Calu3 (cell line): ENCODE measurements at regions of chr1 and their contacts with region 1.

Region 1: DNA sequence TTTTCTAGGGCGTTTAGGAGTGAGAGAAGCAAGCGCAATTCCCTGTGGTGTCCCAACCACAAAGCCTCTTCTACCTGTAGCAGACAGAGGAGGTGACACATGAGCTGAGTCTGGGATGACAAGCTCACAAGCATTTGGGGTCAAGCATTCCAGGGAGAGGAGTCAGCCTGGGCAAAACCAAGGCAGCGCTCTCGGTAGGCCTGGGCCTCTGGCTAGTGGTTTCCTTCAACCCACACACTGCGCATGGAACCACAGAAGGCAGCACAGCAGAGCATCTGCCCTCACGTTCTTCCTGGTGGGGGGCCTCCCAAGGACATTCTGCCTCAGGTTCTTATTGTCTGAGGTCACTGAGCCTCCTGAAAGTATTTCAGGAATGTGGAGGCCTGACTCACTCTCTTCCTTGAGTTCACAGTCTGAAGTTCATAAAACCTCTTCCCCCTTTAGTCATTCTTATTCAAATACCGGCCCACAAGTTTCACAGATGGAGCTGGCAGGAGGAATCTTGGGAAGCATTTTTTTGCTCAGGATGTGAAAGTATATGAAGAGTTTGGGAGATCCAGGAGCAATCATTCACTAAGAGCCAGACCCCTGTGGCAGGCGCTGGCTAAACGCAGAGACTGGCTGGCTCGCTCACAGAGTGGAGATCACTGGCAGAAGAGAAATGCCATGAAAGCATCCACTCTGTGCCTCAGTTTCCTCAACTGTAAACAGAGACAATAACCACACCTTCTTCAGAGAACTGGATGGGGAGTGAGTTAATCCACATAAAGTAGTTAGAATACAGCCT is 26.8 kb downstream of the CCN1 start:
- DNase-seq: peak; percentile 89
- H3K4me3 Mint-ChIP-seq: peak overlapping the region; percentile 40
- H3K27ac Mint-ChIP-seq: peak overlapping the region; percentile 88
- H3K4me1 Mint-ChIP-seq: peaks cover 88% of the 10 kb centered on the region
- H3K27me3 Mint-ChIP-seq: no peaks in the 10 kb centered on the region
- CTCF ChIP-seq: no peak

Region 2: DNA sequence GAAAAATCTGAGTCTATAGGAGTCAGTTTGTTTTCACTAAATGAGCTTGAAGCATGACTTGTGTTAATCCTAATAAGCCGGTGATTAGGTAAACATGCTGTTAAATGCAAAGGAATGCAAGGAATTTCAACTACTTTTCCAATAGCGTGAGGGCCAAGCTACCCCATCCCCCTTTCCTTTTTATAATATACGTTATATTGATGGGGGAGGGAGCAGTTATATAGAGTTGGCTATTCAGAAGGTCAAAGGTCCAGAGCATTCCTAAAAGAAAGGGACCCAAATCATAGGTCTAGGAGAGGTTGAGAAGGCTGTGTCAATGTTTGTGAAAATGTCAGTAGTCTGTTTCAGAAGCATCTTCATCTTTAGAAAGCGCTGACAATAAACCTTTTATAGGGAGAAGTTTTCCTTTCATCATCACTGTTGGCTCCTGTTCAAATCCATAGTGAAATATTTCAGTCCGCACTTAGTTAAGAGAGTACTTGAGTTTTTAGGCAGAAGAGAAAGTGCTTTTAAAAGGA is 23.0 kb before region 1 on chr1:
- CTCF ChIA-PET with region 1: interaction called, 10 read pairs
- intact Hi-C with region 1: loop called (anchors 1 kb)
- DNase-seq: no peak
- H3K4me3 Mint-ChIP-seq: peak overlapping the region; percentile 36
- H3K27ac Mint-ChIP-seq: peak overlapping the region; percentile 85
- H3K4me1 Mint-ChIP-seq: peaks cover 34% of the 10 kb centered on the region
- H3K27me3 Mint-ChIP-seq: no peaks in the 10 kb centered on the region
- CTCF ChIP-seq: no peak

Region 3: GRCh38 chr1:85692730-85693314 is 85.5 kb after region 1 on chr1:
- CTCF ChIA-PET with region 1: interaction called, 39 read pairs
- intact Hi-C with region 1: loop called (anchors 1 kb)
- DNase-seq: no peak
- H3K4me3 Mint-ChIP-seq: no peak overlapping the region
- H3K27ac Mint-ChIP-seq: peak overlapping the region; percentile 78
- H3K4me1 Mint-ChIP-seq: peaks cover 32% of the 10 kb centered on the region
- H3K27me3 Mint-ChIP-seq: no peaks in the 10 kb centered on the region
- CTCF ChIP-seq: no peak

Region 4: DNA sequence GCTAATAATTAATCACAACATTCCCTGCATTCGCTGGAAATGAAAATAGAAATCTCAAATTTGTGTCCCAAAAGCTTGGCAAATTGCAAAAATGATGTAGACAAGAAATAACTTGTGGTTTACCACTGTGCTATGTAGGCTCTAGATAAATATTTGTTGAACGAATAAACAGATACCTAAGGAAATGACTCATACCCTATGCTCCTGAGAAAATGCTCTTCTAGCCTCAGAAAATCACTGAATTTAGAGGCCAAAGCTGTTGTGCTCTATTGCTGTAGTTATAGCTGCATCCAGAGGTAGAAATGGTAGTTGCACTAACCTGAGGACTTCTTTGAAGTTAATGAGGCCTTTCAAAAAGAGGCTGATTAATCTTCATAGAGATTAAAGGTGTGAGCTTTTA is 242.9 kb after region 1 on chr1:
- CTCF ChIA-PET with region 1: interaction called, 5 read pairs
- intact Hi-C with region 1: loop called (anchors 2 kb)
- DNase-seq: peak; percentile 15
- H3K4me3 Mint-ChIP-seq: no peak overlapping the region
- H3K27ac Mint-ChIP-seq: peak overlapping the region; percentile 71
- H3K4me1 Mint-ChIP-seq: peaks cover 29% of the 10 kb centered on the region
- H3K27me3 Mint-ChIP-seq: no peaks in the 10 kb centered on the region
- CTCF ChIP-seq: no peak